GM10248 (cell line): ENCODE measurements at regions of chr12 and their contacts with region 1.

Region 1: DNA sequence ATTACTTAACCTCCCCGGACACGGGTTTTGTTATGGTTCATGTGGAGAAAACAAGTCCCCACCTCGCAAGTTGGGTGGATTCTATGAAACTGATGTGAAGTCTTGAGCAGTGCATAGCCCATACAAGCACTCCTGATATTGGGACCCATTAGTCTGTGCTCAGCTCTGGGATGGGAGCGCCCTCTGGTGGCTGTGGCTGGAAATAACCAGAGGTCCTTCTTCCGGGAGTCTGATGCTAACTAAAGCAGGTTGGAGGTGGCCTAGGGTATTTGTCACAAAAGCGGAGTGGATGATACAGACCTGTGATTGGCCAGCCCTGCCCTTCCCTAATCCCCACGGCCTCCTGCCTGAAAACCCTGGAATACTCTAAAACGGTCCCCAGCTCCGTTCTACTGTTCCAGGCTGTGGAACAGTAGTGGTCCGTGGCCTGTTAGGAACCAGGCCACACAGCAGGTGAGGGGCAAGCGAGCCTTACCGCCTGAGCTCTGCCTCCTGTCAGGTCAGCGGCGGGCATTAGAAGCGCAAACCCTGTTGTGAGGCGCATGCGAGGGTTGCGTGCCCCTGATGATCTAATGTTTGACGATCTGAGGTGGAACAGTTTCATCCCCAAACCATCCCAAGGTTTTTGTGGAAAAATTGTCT is 6.4 kb downstream of the SLC48A1 start:
- DNase-seq: peak; percentile 90
- CTCF ChIP-seq: peak; percentile 96

Region 2: DNA sequence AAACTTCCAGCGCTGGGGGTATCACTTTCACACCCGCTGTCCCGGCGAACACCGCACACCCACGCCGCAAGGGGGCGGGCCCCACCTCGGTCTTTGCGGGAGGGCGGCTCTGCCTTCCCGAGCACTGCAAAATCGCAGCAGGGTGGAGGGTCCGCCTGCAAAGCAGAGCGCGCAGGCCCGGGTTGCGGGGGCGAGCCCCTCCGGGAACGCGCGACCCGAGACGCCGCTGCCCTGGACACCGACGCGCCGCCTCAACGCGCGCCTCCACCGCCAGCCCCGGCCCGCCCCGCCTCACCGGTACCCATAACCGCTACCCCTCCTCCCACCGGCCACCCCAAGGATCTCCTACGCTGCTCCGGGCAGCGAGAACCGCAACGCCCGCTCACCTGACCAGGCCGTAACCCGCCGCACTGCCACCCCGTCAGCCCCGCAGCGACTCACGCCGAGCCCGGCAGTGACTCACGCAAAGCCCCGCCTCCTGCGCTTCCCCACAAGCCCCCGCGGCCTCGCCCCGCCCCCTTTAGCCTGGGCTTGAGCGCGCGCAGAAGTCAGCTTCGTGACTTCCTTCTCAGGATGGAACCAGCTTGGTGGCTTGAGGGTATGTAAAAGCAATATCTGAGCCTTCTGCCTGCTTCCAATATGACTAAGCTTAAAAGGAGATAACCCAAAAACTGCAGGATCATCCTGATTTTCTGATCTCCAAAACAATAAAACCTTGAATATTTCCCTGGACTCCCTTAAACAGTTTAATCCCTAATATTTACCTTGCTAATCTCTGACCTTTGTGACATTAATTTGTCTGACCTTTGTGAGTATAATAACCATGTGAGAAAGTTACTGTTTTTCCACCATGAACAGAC is 73.6 kb before region 1 on chr12 and contains the start of gene RPAP3:
- CTCF ChIA-PET with region 1: interaction called, 1,524 read pairs
- POLR2A ChIA-PET with region 1: no interaction called
- DNase-seq: peak; percentile 93
- CTCF ChIP-seq: peak; percentile 57

Region 3: GRCh38 chr12:47767216-47767724 is 12.2 kb before region 1 on chr12:
- CTCF ChIA-PET with region 1: interaction called, 379 read pairs
- POLR2A ChIA-PET with region 1: no interaction called
- DNase-seq: peak; percentile 71
- CTCF ChIP-seq: peak; percentile 83

Region 4: GRCh38 chr12:47803191-47803875 is 23.9 kb after region 1 on chr12:
- CTCF ChIA-PET with region 1: interaction called, 23 read pairs
- POLR2A ChIA-PET with region 1: no interaction called
- DNase-seq: no peak
- CTCF ChIP-seq: no peak

Region 5: DNA sequence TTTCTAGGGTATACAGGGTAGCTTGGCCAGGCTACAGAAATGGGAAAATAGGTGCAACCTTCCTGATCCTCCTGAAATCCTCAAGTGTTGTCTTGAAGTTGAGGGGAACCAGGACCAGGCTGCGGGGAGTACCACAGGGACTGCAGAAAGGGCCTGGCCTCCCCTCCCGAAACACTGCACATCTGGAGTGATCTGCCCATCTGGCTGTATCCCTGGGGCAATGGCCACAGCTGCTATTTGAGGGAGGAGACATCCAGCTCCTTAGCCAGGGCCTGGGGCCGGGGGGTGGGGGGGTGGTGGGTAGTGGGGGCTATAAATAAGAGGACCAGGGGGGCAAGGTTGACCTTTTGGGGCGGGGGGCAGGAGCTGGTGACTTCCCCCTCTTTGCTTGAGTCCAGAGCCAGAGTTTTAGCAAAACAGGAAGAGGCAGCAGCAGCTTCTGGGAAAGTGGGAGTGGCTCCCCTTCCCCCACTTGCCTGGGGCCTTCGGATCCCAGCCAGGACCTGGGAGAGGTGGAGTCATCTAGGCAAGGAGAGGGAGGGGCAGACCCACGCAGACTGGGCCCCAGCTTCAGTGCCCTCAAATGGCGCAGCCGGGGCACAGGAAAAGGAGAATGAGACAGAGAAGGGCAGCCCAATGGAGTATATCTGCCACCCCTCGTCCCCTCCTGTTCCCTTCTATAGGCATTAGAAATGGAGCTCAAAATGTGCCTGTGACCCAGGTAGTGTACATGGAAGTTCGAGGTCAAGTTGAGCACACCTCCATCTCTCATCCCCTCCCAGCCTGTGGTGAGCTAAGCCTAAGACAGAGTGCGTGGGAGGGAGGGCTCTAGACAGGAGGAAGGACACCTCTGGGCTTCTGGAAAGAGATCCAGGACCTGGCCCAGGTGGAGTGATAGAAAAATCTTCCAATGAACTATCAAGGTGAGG is 49.5 kb after region 1 on chr12:
- CTCF ChIA-PET with region 1: interaction called, 685 read pairs
- POLR2A ChIA-PET with region 1: no interaction called
- DNase-seq: no peak
- CTCF ChIP-seq: no peak